Psoas muscle (tissue), 8 donors: ENCODE measurements at regions of chr19 and their contacts with region 1.

Region 1: DNA sequence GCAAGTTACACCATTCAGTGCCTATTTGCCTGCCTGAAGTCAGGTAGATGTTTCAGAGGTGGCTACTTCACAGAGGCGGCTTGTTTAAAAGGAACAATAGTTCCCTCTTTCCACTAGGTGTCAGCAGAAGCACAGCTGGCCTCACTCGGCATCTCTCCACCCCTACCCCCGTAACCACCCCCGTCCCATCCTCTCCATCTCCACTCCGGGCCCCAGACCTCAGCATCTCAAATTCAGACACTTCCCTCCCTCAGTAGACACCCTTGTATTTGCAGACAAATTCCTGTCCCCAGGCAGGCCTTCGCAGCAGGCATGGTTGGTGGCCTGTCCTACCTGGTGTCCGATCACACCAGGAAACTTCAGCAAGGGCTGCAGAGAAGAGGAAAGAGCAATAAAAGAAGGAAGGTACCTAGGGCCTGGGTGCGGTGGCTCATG is 9.1 kb upstream of the DPP9 start:
- DNase-seq: peak in 1 of 2 donors; percentile 74
- ATAC-seq: peak; percentile 89 to 94 (median 90)
- H3K4me3 ChIP-seq: no peak overlapping the region
- H3K27ac ChIP-seq: no peak overlapping the region
- H3K4me1 ChIP-seq: peaks cover 5% of the 10 kb centered on the region
- H3K27me3 ChIP-seq: no peaks in the 10 kb centered on the region
- CTCF ChIP-seq: peak; percentile 75

Region 2: GRCh38 chr19:4449022-4449638 is 283.6 kb before region 1 on chr19:
- intact Hi-C with region 1: no loop called
- DNase-seq: peak; percentile 84 to 93
- ATAC-seq: peak; percentile 86 to 92 (median 88)
- H3K4me3 ChIP-seq: no peak overlapping the region
- H3K27ac ChIP-seq: peak overlapping the region; percentile 85
- H3K4me1 ChIP-seq: peaks cover 15% of the 10 kb centered on the region
- H3K27me3 ChIP-seq: no peaks in the 10 kb centered on the region
- CTCF ChIP-seq: peak; percentile 34

Region 3: GRCh38 chr19:4791170-4792018 is 58.7 kb after region 1 on chr19 and contains the start of gene FEM1A:
- intact Hi-C with region 1: loop called (anchors 2 to 5 kb)
- DNase-seq: peak; percentile 99
- ATAC-seq: peak; percentile 90 to 96 (median 94)
- H3K4me3 ChIP-seq: peak within 1 kb of the TSS; percentile 87
- H3K27ac ChIP-seq: peak within 1 kb of the TSS; percentile 93
- H3K4me1 ChIP-seq: peaks cover 32% of the 10 kb centered on the region
- H3K27me3 ChIP-seq: no peaks in the 10 kb centered on the region
- CTCF ChIP-seq: peak; percentile 98
- total RNA-seq, gene FEM1A: 135 to 210 (median 149) TPM

Region 4: GRCh38 chr19:4803736-4804695 is 71.3 kb after region 1 on chr19:
- intact Hi-C with region 1: loop called (anchors 1 kb)
- DNase-seq: peak; percentile 60 to 84
- ATAC-seq: peak; percentile 46 to 56 (median 49)
- H3K4me3 ChIP-seq: no peak overlapping the region
- H3K27ac ChIP-seq: peak overlapping the region; percentile 88
- H3K4me1 ChIP-seq: peaks cover 20% of the 10 kb centered on the region
- H3K27me3 ChIP-seq: no peaks in the 10 kb centered on the region
- CTCF ChIP-seq: peak; percentile 73

Region 5: GRCh38 chr19:4851551-4852290 is 119.0 kb after region 1 on chr19:
- intact Hi-C with region 1: loop called (anchors 5 kb)
- DNase-seq: peak; percentile 79 to 87
- ATAC-seq: peak; percentile 79 to 90 (median 86)
- H3K4me3 ChIP-seq: no peak overlapping the region
- H3K27ac ChIP-seq: no peak overlapping the region
- H3K4me1 ChIP-seq: no peaks in the 10 kb centered on the region
- H3K27me3 ChIP-seq: no peaks in the 10 kb centered on the region
- CTCF ChIP-seq: peak; percentile 85

Region 6: DNA sequence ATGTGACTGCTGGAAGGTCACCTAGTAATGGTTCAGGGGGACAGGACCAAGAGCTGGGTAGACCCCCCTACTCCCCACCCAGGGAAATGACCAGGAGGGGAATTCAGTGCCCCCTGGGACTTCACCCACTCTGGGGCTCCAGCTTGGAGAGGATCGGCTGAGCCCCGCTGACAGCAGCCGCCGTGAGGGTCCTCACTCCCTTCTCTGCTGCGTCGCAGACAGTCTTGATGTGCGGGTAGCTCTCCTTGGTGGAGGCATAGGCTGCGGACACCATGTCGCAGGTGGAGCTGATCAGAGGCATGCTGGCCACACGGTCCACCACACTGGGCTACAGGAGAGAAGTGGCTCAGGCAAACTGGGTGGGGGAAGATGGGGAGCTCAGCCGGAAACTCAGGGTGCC is 127.0 kb after region 1 on chr19:
- intact Hi-C with region 1: loop called (anchors 5 kb)
- DNase-seq: no peak
- ATAC-seq: no peak
- H3K4me3 ChIP-seq: no peak overlapping the region
- H3K27ac ChIP-seq: no peak overlapping the region
- H3K4me1 ChIP-seq: no peaks in the 10 kb centered on the region
- H3K27me3 ChIP-seq: no peaks in the 10 kb centered on the region
- CTCF ChIP-seq: no peak

Region 7: GRCh38 chr19:4909897-4910593 is 177.3 kb after region 1 on chr19:
- intact Hi-C with region 1: loop called in 1 of 2 experiments (anchors 10 kb)
- DNase-seq: peak; percentile 93 to 96
- ATAC-seq: peak; percentile 87 to 95 (median 91)
- H3K4me3 ChIP-seq: peak overlapping the region; percentile 79
- H3K27ac ChIP-seq: no peak overlapping the region
- H3K4me1 ChIP-seq: peaks cover 19% of the 10 kb centered on the region
- H3K27me3 ChIP-seq: no peaks in the 10 kb centered on the region
- CTCF ChIP-seq: no peak